ENCODE measurements at regions of chr4 and their contacts with region 1.

Region 1: DNA sequence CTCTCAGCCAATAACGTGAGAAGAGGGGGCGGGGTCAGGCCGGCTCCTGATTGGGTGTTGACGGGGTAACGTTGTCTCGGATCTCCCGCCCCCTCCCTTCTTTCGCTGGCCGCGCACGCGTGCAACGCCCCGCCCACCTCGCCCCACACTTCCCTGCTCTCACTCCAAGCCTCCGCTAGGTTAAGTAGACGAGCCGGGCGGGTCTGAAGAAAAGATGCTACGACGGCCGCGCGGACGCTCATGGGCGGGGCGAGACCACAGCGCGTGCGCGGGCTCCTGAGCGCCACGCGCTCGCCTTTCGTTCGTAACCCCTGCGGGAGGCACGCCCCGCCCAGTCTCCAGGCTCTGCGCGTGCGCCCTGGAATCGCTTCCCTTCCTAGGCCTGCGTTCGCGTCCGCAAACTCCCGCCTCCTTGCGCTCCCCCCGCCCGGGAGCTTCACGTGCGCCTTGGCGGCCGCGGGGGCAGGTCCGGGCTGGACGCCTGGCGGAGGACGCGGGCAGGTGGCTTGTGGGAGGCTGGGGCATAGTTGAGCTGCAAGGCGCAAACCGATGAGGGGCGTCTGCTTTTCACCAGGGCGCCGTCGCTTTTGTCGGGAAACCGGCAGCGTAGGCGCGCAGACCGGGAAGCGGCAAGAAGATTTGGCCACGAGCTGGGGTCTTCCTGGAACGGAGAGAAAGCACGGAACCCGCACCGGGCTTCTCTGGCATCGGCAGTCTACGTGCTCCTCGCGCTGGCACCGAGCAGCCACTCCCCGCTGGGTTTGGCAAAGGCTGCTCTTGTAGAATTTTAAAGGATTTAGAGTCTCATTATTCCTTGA is 467 bp upstream of the PGRMC2 start:
- DNase-seq: peak; percentile 100
- ATAC-seq: peak; percentile 98
- H3K4me3 ChIP-seq: peak overlapping the region; percentile 9 to 68
- H3K27ac ChIP-seq: peak overlapping the region in 1 of 2 donors; percentile 30
- H3K4me1 ChIP-seq: no peaks in the 10 kb centered on the region
- H3K27me3 ChIP-seq: no peaks in the 10 kb centered on the region

Region 2: DNA sequence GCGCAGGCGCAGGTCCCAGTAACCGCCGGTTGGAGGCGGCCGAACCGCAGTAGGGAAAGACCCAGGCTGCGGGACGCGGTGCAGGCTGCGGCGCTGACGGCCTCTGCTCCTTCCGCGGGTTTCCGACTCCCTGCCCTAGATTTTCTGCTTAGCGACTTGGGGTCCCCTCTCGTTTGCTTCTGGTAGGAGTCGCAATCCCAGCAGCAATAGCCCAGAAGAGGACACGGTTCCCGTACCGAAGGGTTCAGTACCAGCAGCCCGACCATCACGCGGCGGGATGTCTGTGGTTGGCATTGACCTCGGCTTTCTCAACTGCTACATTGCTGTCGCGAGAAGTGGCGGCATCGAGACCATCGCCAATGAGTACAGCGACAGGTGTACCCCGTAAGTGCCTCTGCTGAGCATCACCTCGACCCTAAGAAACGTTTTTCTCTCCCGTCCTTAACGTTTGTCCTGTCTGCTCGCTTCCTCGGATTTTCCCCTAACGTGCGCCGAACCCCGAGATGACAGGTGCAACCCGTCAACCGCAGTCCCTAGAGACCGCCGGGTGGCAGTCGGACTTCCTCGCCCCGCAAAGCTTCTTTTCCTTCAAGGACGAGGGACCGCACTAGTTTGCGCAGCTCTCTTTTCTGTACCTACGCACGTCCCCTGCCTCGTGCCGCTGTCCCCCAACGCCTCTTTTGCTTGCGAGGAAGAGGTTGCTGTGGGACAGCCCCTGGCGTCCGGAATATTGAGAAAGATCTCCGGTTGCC is 505.6 kb before region 1 on chr4 and contains the start of gene HSPA4L:
- intact Hi-C with region 1: no loop called
- DNase-seq: peak in 1 of 2 donors; percentile 69
- ATAC-seq: peak; percentile 98
- H3K4me3 ChIP-seq: peak within 1 kb of the TSS; percentile 55 to 82
- H3K27ac ChIP-seq: peak within 1 kb of the TSS; percentile 24 to 37
- H3K4me1 ChIP-seq: peaks cover 0 to 3% of the 10 kb centered on the region in 2 donors
- H3K27me3 ChIP-seq: no peaks in the 10 kb centered on the region
- total RNA-seq, gene HSPA4L: 12.6 to 17.7 TPM

Region 3: GRCh38 chr4:128220286-128221235 is 67.5 kb before region 1 on chr4:
- intact Hi-C with region 1: loop called in 1 of 2 experiments (anchors 5 kb)
- DNase-seq: no peak
- ATAC-seq: no peak
- H3K4me3 ChIP-seq: no peak overlapping the region
- H3K27ac ChIP-seq: no peak overlapping the region
- H3K4me1 ChIP-seq: no peaks in the 10 kb centered on the region
- H3K27me3 ChIP-seq: no peaks in the 10 kb centered on the region

Region 4: GRCh38 chr4:128386761-128387599 is 98.9 kb after region 1 on chr4:
- intact Hi-C with region 1: loop called in 1 of 2 experiments (anchors 2 kb)
- DNase-seq: peak; percentile 95
- ATAC-seq: peak; percentile 95
- H3K4me3 ChIP-seq: no peak overlapping the region
- H3K27ac ChIP-seq: peak overlapping the region in 1 of 2 donors; percentile 52
- H3K4me1 ChIP-seq: peaks cover 0 to 3% of the 10 kb centered on the region in 2 donors
- H3K27me3 ChIP-seq: no peaks in the 10 kb centered on the region

Region 5: GRCh38 chr4:128524311-128524710 is 236.2 kb after region 1 on chr4:
- intact Hi-C with region 1: loop called in 1 of 2 experiments (anchors 5 kb)
- DNase-seq: peak; percentile 88 to 91
- ATAC-seq: peak; percentile 83
- H3K4me3 ChIP-seq: no peak overlapping the region
- H3K27ac ChIP-seq: peak overlapping the region; percentile 87 to 95
- H3K4me1 ChIP-seq: peaks cover 3 to 6% of the 10 kb centered on the region in 2 donors
- H3K27me3 ChIP-seq: no peaks in the 10 kb centered on the region

Region 6: GRCh38 chr4:128558896-128559679 is 271.0 kb after region 1 on chr4:
- intact Hi-C with region 1: loop called in 1 of 2 experiments (anchors 10 kb)
- DNase-seq: peak in 1 of 2 donors; percentile 55
- ATAC-seq: peak; percentile 11
- H3K4me3 ChIP-seq: no peak overlapping the region
- H3K27ac ChIP-seq: peak overlapping the region; percentile 55 to 83
- H3K4me1 ChIP-seq: peaks cover 5% of the 10 kb centered on the region in 2 donors
- H3K27me3 ChIP-seq: no peaks in the 10 kb centered on the region

Region 7: DNA sequence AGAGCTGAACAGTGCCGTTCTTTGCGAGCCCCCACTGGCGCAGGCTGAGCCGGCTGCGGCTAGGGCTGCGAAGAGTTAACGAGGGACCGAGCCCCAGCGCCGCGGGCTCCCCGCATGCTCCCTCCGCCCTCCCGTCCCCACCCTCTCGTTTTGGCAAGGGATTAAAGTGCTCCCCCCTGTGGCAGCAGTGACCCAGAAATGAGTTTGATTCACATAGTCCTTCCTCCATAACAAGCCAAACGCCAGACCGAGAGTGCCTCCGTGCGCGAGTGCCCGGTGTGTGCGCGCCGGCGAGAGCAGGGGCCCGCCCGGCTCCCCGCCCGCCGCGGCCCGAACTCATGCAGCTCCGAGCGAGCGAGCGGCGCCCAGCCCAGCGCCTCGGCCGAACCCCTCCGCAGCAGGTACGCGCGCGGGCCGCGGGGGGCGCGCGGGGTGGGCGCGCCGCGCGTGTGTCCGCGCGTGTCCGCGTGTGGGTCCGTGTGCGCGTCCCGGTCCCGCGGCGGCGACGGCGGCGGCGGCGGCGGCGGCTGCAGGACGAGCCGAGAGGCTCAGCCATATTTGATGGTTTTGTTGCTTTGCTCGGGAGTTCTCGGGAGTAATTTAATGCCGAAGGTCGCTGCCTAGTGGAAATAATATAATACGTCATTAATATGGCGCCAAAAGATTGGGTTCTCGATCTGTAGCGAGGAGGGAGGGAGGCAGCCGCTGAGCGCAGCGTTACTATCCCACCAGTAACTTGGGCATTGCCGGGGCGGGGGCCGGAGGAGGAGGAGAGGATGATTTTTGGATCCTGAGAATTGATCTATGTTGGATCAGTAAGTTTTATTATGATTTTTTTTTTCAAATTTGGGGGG is 521.6 kb after region 1 on chr4 and contains the start of gene JADE1:
- intact Hi-C with region 1: loop called in 1 of 2 experiments (anchors 10 kb)
- DNase-seq: peak; percentile 93 to 94
- ATAC-seq: peak; percentile 87
- H3K4me3 ChIP-seq: peak within 1 kb of the TSS; percentile 64 to 72
- H3K27ac ChIP-seq: peak within 1 kb of the TSS; percentile 84 to 90
- H3K4me1 ChIP-seq: no peaks in the 10 kb centered on the region
- H3K27me3 ChIP-seq: no peaks in the 10 kb centered on the region
- total RNA-seq, gene JADE1: 32.2 to 32.8 TPM

Region 8: DNA sequence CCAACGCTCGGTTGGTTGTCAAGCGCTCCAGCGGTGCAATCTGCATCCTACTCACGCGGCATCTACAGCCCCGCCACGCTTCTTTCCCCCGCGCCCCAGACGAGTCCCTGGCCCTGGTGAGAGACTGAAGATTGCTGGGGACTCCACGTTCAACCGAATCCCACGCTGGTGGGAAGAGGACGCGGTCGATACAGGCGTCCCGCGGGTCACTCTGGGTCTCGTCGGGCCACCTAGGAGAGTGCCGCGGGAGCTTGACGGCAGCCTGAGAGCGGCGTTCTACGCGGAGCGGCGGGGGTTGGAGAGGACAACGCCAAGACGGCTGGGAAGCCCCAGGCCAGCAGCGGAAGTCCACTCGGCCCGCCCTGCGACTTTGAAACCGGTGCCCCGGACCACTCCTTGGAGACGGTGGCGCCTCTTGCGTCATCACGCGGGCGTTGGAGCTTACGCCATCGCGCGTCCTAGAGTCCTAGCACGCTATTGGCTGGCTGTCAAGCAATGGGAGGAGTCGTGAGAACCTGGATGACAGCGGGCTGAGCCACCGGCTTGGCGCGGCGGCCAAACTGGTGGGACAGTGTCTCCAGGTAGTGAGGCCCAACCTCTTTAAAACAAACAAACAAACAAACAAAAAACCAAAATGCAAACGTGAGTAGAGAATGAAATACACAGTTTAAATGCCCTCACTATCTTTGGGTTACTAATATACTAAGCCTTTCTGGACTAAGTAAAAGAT is 805.3 kb after region 1 on chr4 and contains the start of gene SCLT1:
- intact Hi-C with region 1: loop called in 1 of 2 experiments (anchors 5 kb)
- DNase-seq: peak; percentile 100
- ATAC-seq: peak; percentile 99
- H3K4me3 ChIP-seq: peak within 1 kb of the TSS; percentile 74 to 93
- H3K27ac ChIP-seq: peak within 1 kb of the TSS; percentile 23 to 97
- H3K4me1 ChIP-seq: peaks cover 0 to 3% of the 10 kb centered on the region in 2 donors
- H3K27me3 ChIP-seq: no peaks in the 10 kb centered on the region
- total RNA-seq, gene SCLT1: 16.1 to 19.8 TPM

Measured in aorta (tissue), 5 donors.